ENCODE measurements at regions of chr14 and their contacts with region 1.

Region 1: GRCh38 chr14:21978184-21978998 is 304.8 kb upstream of the OR4E1 start:
- DNase-seq: peak; percentile 63
- H3K4me3 Mint-ChIP-seq: peak overlapping the region; percentile 63
- H3K27ac Mint-ChIP-seq: peak overlapping the region; percentile 71
- H3K4me1 Mint-ChIP-seq: peaks cover 22% of the 10 kb centered on the region
- H3K27me3 Mint-ChIP-seq: peaks cover 16% of the 10 kb centered on the region

Region 2: DNA sequence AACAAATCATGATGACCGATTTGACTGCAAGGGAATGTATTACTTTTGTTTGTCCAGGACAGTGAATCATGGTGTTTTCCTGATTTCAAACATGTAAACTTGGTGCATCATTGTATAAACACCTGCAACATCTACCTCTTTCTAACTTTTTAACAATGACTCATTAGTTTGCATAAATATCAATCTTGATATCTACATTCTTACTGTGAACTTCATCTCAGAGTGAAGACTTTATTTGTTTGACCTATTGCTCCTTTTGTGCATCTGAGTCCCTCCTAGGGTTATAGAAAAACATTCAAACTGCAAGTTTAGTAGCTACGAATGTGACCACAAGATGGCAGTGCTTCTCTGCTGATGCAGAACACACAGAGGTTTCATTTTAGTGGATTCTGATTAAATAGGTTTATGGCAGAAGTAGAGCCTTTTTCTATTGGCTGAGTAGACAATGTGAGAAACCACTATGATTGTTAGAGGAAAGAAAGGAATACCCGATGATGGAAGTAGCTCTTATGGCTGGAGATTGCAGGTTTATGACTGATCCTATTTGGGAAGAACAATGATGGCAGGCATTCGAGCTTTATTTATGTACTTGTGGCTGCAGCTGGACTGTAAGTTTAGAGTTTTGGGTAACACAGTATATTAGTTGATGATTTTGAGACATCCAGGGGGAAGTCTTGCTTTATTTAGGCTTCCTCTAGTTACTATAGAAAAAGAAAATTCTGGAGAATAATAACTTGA is 60.5 kb before region 1 on chr14:
- CTCF ChIA-PET with region 1: interaction called, 23 read pairs
- POLR2A ChIA-PET with region 1: interaction called, 3 read pairs
- DNase-seq: peak; percentile 66
- H3K4me3 Mint-ChIP-seq: peak overlapping the region; percentile 71
- H3K27ac Mint-ChIP-seq: peak overlapping the region; percentile 74
- H3K4me1 Mint-ChIP-seq: peaks cover 69% of the 10 kb centered on the region
- H3K27me3 Mint-ChIP-seq: no peaks in the 10 kb centered on the region

Region 3: DNA sequence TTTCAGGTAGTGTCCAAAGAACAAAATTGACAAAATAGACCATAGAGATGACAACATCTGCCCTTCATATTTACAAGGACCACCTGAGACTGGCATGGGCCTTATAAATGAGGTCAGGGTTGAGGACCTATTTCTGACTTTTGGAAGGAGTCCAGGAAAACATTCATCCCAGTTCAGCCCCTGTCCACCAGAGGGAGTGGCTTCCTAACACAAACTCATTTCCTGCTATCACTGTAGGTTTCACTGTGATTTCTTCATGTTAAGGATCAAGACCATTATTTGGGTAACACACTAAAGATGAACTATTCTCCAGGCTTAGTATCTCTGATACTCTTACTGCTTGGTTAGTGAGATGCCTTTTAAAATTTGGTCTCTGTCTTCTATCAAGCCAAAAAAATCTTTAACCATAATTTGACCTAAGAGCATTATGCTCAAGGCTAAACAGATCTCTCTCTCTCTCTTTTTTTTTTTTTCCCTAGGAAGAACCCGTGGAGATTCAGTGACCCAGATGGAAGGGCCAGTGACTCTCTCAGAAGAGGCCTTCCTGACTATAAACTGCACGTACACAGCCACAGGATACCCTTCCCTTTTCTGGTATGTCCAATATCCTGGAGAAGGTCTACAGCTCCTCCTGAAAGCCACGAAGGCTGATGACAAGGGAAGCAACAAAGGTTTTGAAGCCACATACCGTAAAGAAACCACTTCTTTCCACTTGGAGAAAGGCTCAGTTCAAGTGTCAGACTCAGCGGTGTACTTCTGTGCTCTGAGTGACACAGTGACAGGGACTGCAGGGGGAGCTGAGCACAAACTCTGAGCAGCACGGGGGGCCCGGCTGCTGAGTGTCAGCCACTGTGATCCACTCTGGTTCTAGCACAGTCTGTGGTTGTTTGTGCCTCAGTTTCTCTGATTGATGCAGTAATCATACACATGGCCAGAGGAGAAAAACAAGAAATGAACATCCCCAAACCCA is 37.2 kb before region 1 on chr14:
- CTCF ChIA-PET with region 1: interaction called, 15 read pairs
- POLR2A ChIA-PET with region 1: no interaction called
- DNase-seq: peak; percentile 39
- H3K4me3 Mint-ChIP-seq: peak overlapping the region; percentile 66
- H3K27ac Mint-ChIP-seq: peak overlapping the region; percentile 50
- H3K4me1 Mint-ChIP-seq: peaks cover 18% of the 10 kb centered on the region
- H3K27me3 Mint-ChIP-seq: peaks cover 17% of the 10 kb centered on the region

Region 4: DNA sequence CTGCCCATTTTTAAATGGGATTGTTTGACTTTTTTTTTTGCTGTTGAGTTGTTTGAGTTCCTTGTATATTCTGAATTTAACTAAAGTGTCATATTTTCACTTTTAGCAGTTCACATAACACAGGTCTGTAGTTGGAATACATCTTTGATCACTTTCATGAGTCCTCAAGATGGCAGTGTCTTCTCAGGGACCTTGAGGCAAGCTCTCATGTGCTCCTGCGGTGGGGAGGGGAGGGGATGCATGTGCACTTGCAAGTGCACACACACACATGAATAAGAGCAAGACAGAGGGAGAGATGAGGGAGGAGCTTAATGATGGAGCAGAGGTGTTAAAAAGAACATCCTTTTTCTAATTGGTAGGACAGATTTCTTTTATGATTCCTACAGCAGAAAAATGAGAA is 13.3 kb before region 1 on chr14:
- CTCF ChIA-PET with region 1: interaction called, 21 read pairs
- POLR2A ChIA-PET with region 1: no interaction called
- DNase-seq: peak; percentile 50
- H3K4me3 Mint-ChIP-seq: peak overlapping the region; percentile 19
- H3K27ac Mint-ChIP-seq: peak overlapping the region; percentile 9
- H3K4me1 Mint-ChIP-seq: peaks cover 13% of the 10 kb centered on the region
- H3K27me3 Mint-ChIP-seq: peaks cover 3% of the 10 kb centered on the region

Region 5: DNA sequence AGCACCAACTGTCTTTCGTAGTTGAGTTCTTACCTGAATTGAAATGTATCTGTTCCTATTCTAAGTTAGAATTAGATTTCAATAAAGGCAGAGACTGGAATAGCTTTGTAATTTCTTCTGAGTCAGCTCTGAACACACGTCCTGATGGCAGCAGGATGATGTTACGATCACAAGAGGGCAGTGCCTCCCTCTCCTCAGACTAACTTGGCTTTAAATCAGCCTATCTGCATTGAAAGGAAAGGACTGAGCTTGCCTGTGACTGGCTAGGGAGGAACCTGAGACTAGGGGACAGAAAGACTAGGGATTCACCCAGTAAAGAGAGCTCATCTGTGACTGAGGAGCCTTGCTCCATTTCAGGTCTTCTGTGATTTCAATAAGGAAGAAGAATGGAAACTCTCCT is 18.9 kb after region 1 on chr14:
- CTCF ChIA-PET with region 1: interaction called, 106 read pairs
- POLR2A ChIA-PET with region 1: interaction called, 10 read pairs
- DNase-seq: peak; percentile 57
- H3K4me3 Mint-ChIP-seq: peak overlapping the region; percentile 82
- H3K27ac Mint-ChIP-seq: peak overlapping the region; percentile 85
- H3K4me1 Mint-ChIP-seq: peaks cover 27% of the 10 kb centered on the region
- H3K27me3 Mint-ChIP-seq: peaks cover 2% of the 10 kb centered on the region

Region 6: DNA sequence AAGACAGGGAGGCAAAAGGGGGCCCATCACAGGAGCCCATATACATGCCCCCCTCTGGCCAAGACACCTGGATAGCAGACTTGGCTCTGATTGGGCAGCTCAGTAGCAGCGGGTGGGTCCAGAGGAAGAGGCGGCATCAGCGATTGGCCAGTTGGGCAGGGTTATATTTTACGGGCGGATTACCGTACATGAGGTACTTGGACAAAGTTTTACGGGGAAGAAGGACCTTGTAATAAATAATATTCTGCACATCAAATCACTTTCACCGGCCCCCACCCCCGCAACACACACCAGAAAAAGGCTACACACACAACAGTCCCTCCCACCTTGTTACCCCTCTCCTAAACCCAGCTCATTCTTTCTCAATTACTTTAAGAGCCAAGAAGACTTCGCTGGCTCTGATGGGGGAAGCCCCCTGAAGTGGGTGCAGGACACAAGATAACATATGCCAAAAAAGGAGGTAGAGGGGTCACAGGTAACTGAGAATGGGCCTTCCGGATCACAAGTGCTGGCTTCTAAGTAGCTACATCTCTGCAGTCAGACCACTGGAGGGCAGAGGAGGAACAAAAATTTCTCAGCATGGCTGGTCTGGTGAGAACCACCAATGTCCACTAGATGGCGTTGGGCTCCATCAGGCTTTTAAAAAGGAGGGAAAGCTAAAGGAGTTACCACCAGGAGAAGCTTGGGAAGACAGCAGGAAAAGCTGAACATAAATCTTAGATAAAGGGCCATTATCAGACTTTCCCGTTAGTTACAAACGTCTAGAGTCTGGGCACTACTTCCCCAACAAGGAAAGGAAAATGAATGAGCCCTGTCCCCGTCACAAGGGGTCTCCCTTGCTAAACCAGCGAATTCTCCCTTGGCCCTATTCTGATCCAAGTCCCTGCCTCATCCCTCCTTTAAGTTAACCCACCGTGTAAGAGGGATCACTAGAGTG is 1090.4 kb after region 1 on chr14:
- CTCF ChIA-PET with region 1: no interaction called
- POLR2A ChIA-PET with region 1: no interaction called
- DNase-seq: peak; percentile 80
- H3K4me3 Mint-ChIP-seq: no peak overlapping the region
- H3K27ac Mint-ChIP-seq: peak overlapping the region; percentile 36
- H3K4me1 Mint-ChIP-seq: peaks cover 37% of the 10 kb centered on the region
- H3K27me3 Mint-ChIP-seq: no peaks in the 10 kb centered on the region